HEK293 (cell line): ENCODE measurements at regions of chr14 and their contacts with region 1.

Region 1: DNA sequence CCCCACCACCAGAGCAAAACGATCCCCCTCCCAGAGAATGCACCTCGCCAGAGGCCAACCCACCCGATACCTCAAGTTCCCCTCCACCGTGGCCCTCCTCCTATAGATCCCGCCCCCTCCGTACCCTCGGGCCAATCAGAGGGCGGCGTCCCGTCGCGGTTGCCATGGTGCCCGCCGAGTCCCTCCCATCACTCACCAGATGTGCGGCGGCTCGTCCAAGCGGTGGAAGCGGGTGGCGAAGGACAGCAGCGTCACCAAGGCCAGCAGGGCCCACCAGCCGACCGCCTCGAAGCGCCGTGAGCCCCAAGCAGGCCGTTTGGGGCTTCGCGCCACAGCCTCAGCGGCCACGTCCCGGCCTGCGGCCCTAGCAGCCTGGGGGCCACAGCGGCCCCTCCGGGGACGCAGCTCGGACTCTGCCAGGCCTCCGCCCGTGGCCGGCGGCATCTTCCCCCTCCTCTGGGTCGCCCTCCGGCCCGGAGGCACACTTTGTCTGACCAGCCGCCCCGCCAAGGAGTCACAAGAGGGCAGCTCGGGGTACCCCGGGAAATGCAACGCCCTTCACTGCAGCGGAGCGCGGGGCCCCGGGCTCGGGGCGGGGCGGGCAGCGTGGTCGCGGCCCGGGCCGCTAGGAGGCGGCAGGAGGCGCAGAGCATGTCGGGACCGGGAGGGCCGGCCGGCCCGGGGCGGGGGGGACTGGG is at the start of gene POMT2:
- H3K4me3 ChIP-seq: peak within 1 kb of the TSS; percentile 90
- H3K27ac ChIP-seq: peak within 1 kb of the TSS; percentile 92
- H3K4me1 ChIP-seq: peaks cover 10% of the 10 kb centered on the region; the same call in 1 of the 2 replicates
- CTCF ChIP-seq: no peak; the same call in 1 of the 2 replicates

Region 2: DNA sequence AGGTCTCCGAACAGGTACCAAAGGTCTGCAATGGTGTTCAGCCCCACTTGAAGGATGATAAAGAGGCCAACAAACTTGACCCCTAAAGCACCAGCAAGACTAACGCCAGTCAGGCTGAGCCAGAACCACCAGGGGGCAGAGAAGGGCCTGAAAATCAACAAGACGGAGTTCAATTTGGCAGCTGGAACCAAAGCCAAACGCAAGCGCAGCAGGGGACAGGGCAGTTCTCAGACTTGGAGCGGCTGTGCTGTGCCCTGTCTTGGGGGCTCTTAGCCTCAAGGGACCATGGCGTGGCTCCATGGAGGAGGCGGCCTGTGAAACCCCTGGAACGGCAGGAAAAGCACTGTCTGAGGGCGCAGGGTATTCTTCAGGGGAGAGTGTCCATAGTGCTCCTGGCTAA is 19.3 kb before region 1 on chr14:
- CTCF ChIA-PET with region 1: interaction called, 293 read pairs
- POLR2A ChIA-PET with region 1: interaction called, 26 read pairs
- H3K4me3 ChIP-seq: no peak overlapping the region
- H3K27ac ChIP-seq: no peak overlapping the region
- H3K4me1 ChIP-seq: peaks cover 22% of the 10 kb centered on the region
- CTCF ChIP-seq: peak; percentile 78

Region 3: DNA sequence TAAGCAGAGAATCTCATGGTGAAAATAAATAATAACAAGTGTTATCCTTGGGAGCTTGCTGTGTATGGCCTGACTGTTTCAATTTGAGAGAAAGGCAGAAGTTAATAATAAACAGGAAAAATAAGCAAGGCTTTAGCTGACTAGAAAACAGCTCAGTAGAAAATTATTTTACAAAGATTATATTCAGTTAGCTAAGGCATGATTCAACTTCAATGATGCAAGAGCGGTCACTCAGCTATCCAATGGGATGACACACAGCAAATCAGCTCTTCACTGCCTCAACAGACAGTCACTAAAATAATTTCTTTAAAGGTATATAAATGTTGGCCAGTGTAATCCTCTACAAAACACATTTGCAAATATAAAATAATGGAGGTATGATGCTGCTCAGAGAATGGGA is 19.0 kb after region 1 on chr14:
- CTCF ChIA-PET with region 1: interaction called, 4 read pairs
- POLR2A ChIA-PET with region 1: interaction called, 10 read pairs
- H3K4me3 ChIP-seq: no peak overlapping the region
- H3K27ac ChIP-seq: no peak overlapping the region
- H3K4me1 ChIP-seq: peaks cover 19% of the 10 kb centered on the region
- CTCF ChIP-seq: no peak

Region 4: GRCh38 chr14:77376771-77377501 is 56.5 kb after region 1 on chr14 and contains the starts of genes SAMD15 and TMED8:
- CTCF ChIA-PET with region 1: interaction called, 7 read pairs
- POLR2A ChIA-PET with region 1: interaction called, 11 read pairs
- H3K4me3 ChIP-seq: peak within 1 kb of the TSS; percentile 85
- H3K27ac ChIP-seq: peak within 1 kb of the TSS; percentile 87
- H3K4me1 ChIP-seq: peaks cover 19% of the 10 kb centered on the region
- CTCF ChIP-seq: peak; percentile 37; the same call in 1 of the 2 replicates

Region 5: GRCh38 chr14:77457522-77458290 is 137.3 kb after region 1 on chr14 and contains the starts of genes AHSA1 and VIPAS39:
- CTCF ChIA-PET with region 1: interaction called, 5 read pairs
- POLR2A ChIA-PET with region 1: interaction called, 18 read pairs
- H3K4me3 ChIP-seq: peak within 1 kb of the TSS; percentile 90
- H3K27ac ChIP-seq: peak within 1 kb of the TSS; percentile 90
- H3K4me1 ChIP-seq: peaks cover 4% of the 10 kb centered on the region
- CTCF ChIP-seq: no peak